Thyroid gland (tissue), 4 donors: ENCODE measurements at regions of chr12 and their contacts with region 1.

Region 1: DNA sequence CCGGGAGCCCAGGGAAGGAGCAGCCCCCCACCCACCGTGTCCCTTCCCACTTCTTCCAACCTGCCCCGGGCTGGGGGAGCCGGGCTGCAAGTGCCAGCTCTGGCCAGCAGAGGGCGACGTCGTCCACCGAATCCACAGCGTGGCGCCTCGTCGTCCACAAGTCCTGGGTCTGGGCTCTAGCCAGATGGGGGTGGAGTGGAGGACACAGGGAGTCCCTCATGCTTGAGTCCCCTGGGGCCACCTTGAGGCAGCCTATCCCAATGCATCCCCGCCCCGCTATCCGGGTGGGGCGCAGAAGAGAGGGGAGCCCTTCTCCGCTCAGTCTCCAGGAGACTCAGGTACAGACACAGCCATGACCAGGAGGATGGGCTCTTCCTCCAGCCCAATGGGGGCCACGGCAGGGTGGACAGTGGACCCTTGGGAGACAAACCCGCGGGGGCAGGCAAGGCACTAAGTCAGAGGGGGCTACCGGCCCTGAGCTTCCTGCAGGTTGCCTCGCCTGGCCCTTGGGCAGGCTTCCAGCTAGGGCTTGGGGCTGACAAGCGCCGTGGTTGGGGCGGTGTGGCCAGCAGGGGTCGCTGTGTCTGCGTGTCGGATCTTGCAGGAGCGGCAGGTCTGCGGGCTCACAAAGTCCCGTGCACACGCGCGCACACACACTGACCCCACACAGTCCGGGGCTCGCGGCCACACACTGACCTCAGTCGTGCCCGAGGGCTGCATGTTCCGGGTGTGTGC is 5.5 kb downstream of the AQP5 start:
- DNase-seq: peak; percentile 89 to 92
- H3K4me3 ChIP-seq: no peak overlapping the region
- H3K27ac ChIP-seq: no peak overlapping the region
- H3K4me1 ChIP-seq: peaks cover 16 to 31% of the 10 kb centered on the region in 2 donors
- H3K27me3 ChIP-seq: no peaks in the 10 kb centered on the region
- CTCF ChIP-seq: peak; percentile 73 to 91 (median 80)
- POLR2A ChIP-seq: no peak

Region 2: DNA sequence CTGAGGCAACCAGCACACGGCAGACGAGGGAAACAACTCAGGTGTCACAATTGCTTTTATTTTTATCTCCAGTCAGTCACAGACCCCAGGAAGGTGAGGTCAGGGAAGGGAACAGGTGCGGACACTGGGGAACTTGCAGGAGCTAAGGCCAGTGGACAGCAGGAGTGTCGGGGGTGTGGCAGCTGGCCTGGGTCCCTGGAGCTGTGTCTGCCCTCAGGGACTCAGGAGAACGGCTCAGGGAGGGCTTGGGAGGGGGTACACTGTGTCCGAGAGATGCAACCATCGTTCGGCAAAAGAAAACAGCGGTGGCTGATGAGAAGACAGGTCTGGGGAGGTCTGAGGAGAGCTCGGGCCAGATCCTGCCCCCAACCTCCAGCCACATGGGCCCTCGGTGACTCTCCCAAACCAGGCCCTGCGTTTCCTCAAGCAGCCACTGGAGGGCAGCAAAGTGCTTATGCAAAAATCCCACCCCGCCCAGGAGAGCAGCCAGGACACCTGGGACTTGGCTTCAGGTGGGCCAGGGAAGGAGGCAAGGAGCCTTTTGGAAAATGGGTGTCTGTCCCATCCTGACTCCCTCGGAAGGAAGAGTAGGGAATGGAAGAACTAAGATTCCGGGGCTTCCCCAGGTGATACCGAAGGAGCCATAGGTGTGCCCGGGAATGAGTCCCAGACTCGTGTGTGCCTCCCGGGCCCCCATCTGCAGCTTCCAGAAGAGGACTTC is 100.2 kb before region 1 on chr12:
- intact Hi-C with region 1: loop called (anchors 5 kb)
- DNase-seq: peak; percentile 79 to 85
- H3K4me3 ChIP-seq: no peak overlapping the region
- H3K27ac ChIP-seq: no peak overlapping the region
- H3K4me1 ChIP-seq: peaks cover 28 to 57% of the 10 kb centered on the region in 2 donors
- H3K27me3 ChIP-seq: no peaks in the 10 kb centered on the region
- CTCF ChIP-seq: peak; percentile 82 to 100 (median 92)
- POLR2A ChIP-seq: no peak